IMR-90 (cell line): ENCODE measurements at regions of chr2 and their contacts with region 1.

Region 1: GRCh38 chr2:202038471-202039277 is 5.0 kb downstream of the FZD7 start:
- DNase-seq: peak; percentile 62
- ATAC-seq: peak; percentile 7; the same call in 1 of the 2 replicates
- H3K4me3 ChIP-seq: peak overlapping the region; percentile 39
- H3K27ac ChIP-seq: peak overlapping the region; percentile 63; the same call in 1 of the 2 replicates
- H3K4me1 ChIP-seq: peaks cover 16% of the 10 kb centered on the region
- H3K27me3 ChIP-seq: no peaks in the 10 kb centered on the region
- CTCF ChIP-seq: no peak
- POLR2A ChIP-seq: no peak; the same call in 1 of the 2 replicates
- RAD21 ChIP-seq: peak; percentile 3; the same call in 1 of the 2 replicates

Region 2: GRCh38 chr2:201733544-201733943 is 305.1 kb before region 1 on chr2:
- CTCF ChIA-PET with region 1: no interaction called
- POLR2A ChIA-PET with region 1: no interaction called
- dilution Hi-C with region 1: no loop called
- in situ Hi-C with region 1: no loop called
- intact Hi-C with region 1: no loop called
- DNase-seq: no peak
- ATAC-seq: no peak
- H3K4me3 ChIP-seq: no peak overlapping the region
- H3K27ac ChIP-seq: no peak overlapping the region
- H3K4me1 ChIP-seq: no peaks in the 10 kb centered on the region
- H3K27me3 ChIP-seq: no peaks in the 10 kb centered on the region
- CTCF ChIP-seq: no peak
- POLR2A ChIP-seq: no peak
- RAD21 ChIP-seq: no peak

Region 3: DNA sequence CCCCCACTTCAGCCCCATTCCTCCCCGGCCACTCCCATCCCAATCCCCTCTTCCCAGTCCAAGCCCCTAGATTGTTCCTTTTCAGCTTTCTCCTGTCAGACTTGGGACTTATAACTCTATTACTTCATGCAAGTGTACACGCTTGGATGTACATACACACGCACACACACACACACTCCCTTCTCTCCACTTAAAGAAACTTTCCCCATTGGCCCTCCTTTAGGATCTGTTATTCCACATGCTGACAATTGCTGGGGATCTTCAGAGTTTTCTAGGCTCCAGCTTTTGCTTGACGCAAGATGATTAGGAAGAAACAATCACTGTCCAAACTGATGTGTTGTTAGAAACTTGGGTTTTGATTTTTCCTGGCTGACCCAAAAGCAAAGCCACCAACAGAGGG is 156.9 kb before region 1 on chr2:
- CTCF ChIA-PET with region 1: no interaction called
- POLR2A ChIA-PET with region 1: no interaction called
- dilution Hi-C with region 1: no loop called
- in situ Hi-C with region 1: no loop called
- intact Hi-C with region 1: no loop called
- DNase-seq: peak; percentile 33
- ATAC-seq: peak; percentile 6
- H3K4me3 ChIP-seq: no peak overlapping the region
- H3K27ac ChIP-seq: peak overlapping the region; percentile 66
- H3K4me1 ChIP-seq: peaks cover 26% of the 10 kb centered on the region
- H3K27me3 ChIP-seq: no peaks in the 10 kb centered on the region
- CTCF ChIP-seq: no peak
- POLR2A ChIP-seq: no peak
- RAD21 ChIP-seq: no peak

Region 4: GRCh38 chr2:202121532-202122162 is 83.0 kb after region 1 on chr2:
- CTCF ChIA-PET with region 1: no interaction called
- POLR2A ChIA-PET with region 1: no interaction called
- dilution Hi-C with region 1: no loop called
- in situ Hi-C with region 1: no loop called
- intact Hi-C with region 1: no loop called
- DNase-seq: no peak
- ATAC-seq: no peak
- H3K4me3 ChIP-seq: no peak overlapping the region
- H3K27ac ChIP-seq: no peak overlapping the region
- H3K4me1 ChIP-seq: peaks cover 15% of the 10 kb centered on the region
- H3K27me3 ChIP-seq: no peaks in the 10 kb centered on the region
- CTCF ChIP-seq: no peak
- POLR2A ChIP-seq: no peak
- RAD21 ChIP-seq: no peak

Region 5: GRCh38 chr2:202158796-202159195 is 120.1 kb after region 1 on chr2:
- CTCF ChIA-PET with region 1: no interaction called
- POLR2A ChIA-PET with region 1: no interaction called
- dilution Hi-C with region 1: no loop called
- in situ Hi-C with region 1: no loop called
- intact Hi-C with region 1: loop called (anchors 1 kb)
- DNase-seq: peak; percentile 46
- ATAC-seq: 0 out of 2 replicates have a peak, but pooled peaks have one; percentile 22
- H3K4me3 ChIP-seq: no peak overlapping the region
- H3K27ac ChIP-seq: no peak overlapping the region
- H3K4me1 ChIP-seq: peaks cover 12% of the 10 kb centered on the region
- H3K27me3 ChIP-seq: no peaks in the 10 kb centered on the region
- CTCF ChIP-seq: peak; percentile 54
- POLR2A ChIP-seq: no peak
- RAD21 ChIP-seq: peak; percentile 61